ENCODE measurements at regions of chr21 and their contacts with region 1.

Region 1: GRCh38 chr21:36319765-36320420 is at the start of gene MORC3:
- DNase-seq: peak; percentile 99
- H3K4me3 ChIP-seq: peak within 1 kb of the TSS; percentile 85 to 97 (median 97)
- H3K27ac ChIP-seq: peak within 1 kb of the TSS; percentile 95
- H3K4me1 ChIP-seq: peaks cover 19% of the 10 kb centered on the region
- H3K27me3 ChIP-seq: no peaks in the 10 kb centered on the region
- CTCF ChIP-seq: no peak
- total RNA-seq, gene MORC3: 32.3 to 44.2 TPM

Region 2: GRCh38 chr21:36246080-36246631 is 73.7 kb before region 1 on chr21:
- CTCF ChIA-PET with region 1: no interaction called
- dilution Hi-C with region 1: loop called (anchors 5 kb)
- in situ Hi-C with region 1: no loop called
- intact Hi-C with region 1: no loop called
- DNase-seq: no peak
- H3K4me3 ChIP-seq: no peak overlapping the region
- H3K27ac ChIP-seq: no peak overlapping the region
- H3K4me1 ChIP-seq: no peaks in the 10 kb centered on the region
- H3K27me3 ChIP-seq: no peaks in the 10 kb centered on the region
- CTCF ChIP-seq: no peak

Region 3: DNA sequence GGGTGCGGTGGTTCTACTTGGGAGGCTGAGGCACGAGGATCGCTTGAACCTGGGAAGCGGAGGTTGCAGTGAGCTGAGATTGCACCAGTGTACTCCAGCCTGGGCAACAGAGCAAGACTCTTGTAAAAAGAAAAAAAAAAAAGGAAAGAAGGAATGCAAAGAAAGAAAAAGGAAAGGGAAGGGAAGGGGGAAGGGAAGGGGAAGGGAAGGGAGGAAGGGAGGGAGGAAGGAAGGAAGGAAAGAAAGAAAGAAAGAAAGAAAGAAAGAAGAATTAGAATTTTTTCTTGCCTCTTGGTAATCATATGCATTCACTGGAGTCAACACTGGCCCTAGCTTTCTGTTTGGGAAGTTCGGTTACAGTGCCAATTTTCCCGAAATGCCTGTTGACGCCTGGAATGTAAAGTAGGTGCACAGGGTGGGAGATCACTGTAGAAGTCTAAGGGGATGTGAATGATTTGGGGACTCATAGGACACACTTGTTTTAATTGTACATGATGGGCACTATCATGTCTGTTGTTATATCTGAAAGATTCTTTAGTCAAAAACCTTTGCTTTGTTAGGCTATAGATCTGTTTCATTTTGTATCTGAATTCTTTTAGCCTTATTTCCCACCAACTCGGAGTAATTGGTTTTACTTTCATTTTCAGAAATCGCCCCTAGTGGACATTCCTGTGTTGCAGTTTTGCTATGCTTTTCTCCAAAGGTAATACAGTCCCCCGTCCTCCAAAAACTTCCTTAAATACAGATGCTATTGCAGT is 59.7 kb before region 1 on chr21:
- CTCF ChIA-PET with region 1: interaction called, 21 read pairs
- dilution Hi-C with region 1: no loop called
- in situ Hi-C with region 1: no loop called
- intact Hi-C with region 1: loop called (anchors 1 kb)
- DNase-seq: peak; percentile 51
- H3K4me3 ChIP-seq: peak overlapping the region; percentile 43 to 57 (median 55)
- H3K27ac ChIP-seq: peak overlapping the region; percentile 36
- H3K4me1 ChIP-seq: peaks cover 3% of the 10 kb centered on the region
- H3K27me3 ChIP-seq: no peaks in the 10 kb centered on the region
- CTCF ChIP-seq: peak; percentile 75 to 88

Region 4: DNA sequence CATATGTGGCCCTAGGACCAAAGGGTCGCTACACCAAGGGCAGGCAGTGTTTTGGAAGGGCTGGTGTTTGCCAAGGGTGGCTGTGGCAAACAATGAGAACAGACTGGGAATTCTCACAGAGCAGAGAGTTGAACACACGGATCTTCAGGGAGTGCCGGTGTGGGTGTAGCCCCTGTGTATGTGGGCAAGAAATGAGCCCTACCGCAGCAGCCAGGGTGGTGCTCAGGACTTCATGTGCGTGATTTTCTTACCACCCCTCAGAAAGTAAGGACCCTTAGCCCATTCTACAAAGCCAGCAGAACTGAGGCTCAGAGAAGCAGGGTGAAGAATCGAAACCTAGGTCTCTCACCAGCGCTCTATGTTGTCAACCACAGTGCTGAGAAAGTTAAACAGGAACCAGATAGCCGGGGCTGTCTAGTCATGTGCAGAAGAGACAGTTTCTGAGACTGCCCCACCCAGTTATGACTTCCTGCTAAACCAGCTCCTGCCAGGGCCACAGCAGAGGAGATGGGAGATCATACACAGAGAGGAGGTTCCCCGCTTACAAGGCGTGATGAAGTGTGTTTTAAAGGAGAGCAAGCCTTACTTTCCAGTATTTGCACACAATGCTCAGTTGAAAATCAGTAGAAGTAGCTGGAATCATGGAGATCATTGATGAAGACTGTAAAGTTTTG is 21.8 kb before region 1 on chr21:
- CTCF ChIA-PET with region 1: no interaction called
- dilution Hi-C with region 1: no loop called
- in situ Hi-C with region 1: no loop called
- intact Hi-C with region 1: loop called (anchors 1 kb)
- DNase-seq: peak; percentile 70
- H3K4me3 ChIP-seq: no peak overlapping the region
- H3K27ac ChIP-seq: no peak overlapping the region
- H3K4me1 ChIP-seq: peaks cover 17% of the 10 kb centered on the region
- H3K27me3 ChIP-seq: no peaks in the 10 kb centered on the region
- CTCF ChIP-seq: no peak

Region 5: DNA sequence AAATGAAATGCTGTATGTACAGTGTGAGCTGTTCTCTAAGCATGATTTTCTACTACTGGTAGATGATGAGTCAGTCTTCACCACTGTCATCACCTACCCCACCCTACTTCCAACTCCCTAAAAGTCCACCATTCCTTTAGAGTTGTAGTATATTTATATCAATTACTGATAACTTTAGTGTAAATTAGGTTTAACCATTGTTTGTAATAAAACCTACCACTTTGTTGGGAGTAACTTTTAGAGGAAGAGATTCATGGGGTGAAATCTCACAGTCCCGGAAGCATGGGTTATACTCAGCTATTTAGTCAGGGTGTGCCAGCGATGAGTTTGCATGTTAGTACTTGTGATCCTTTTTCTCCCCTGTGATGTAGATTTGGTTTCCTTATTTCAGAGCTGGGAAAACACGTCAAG is 17.2 kb after region 1 on chr21:
- CTCF ChIA-PET with region 1: interaction called, 3 read pairs
- dilution Hi-C with region 1: no loop called
- in situ Hi-C with region 1: no loop called
- intact Hi-C with region 1: loop called (anchors 2 kb)
- DNase-seq: peak; percentile 85
- H3K4me3 ChIP-seq: peak overlapping the region in 1 of 3 experiments; percentile 34
- H3K27ac ChIP-seq: peak overlapping the region; percentile 99
- H3K4me1 ChIP-seq: peaks cover 13% of the 10 kb centered on the region
- H3K27me3 ChIP-seq: no peaks in the 10 kb centered on the region
- CTCF ChIP-seq: no peak

Measured in mammary epithelial cell (primary cell).